ENCODE measurements at regions of chr5 and their contacts with region 1.

Region 1: DNA sequence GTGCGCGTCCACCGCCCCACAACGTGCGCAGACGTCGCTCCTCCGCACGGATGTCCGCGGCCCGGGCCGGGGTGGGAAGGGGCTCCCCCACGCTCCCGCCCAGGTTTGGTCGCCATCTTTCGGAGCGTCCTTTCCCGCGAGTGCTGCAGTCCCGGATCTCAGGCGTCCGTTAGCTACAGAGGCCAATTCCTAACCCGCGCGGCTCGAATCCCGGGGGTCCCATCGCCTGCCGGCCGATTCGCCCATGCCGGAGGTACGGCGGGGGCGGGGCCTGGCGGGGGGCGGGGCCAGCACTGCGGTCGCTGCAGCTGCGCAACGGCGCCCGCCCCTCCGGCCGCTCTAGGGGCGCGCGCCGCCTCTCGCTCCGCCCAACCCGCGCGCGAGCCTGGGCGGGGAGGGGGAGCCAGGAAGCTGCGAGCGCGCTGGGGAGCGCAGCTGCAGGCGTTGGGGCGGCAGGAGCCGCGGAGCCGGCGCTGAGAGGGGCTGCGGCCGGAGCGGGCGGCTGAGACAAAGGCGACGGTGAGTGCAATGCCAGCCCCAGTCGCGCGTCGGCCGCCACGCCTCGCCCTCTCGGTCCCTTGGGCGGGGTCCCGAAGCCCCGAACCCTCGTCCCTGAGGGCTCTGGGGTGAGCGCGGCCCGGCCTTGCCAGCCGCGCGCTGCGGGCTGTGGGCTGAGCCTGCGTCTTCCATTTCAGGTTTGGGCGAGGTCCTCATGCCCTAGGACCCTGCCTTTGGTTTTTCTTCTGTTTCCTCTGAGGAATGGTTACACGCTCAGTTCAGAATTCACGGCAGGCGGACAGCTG is at the start of gene CDC42SE2:
- DNase-seq: peak; percentile 84 to 93 (median 90)
- H3K4me3 ChIP-seq: peak within 1 kb of the TSS; percentile 97 to 99
- H3K4me3 Mint-ChIP-seq: peak within 1 kb of the TSS; percentile 91 to 95 (median 94)
- H3K27ac ChIP-seq: peak within 1 kb of the TSS; percentile 96
- H3K27ac Mint-ChIP-seq: peak within 1 kb of the TSS; percentile 92 to 98 (median 97)
- H3K4me1 ChIP-seq: peaks cover 63% of the 10 kb centered on the region
- H3K4me1 Mint-ChIP-seq: peaks cover 23 to 63% (median 43%) of the 10 kb centered on the region in 4 donors
- H3K27me3 ChIP-seq: no peaks in the 10 kb centered on the region
- H3K27me3 Mint-ChIP-seq: no peaks in the 10 kb centered on the region
- total RNA-seq, gene CDC42SE2: 298 to 316 TPM

Region 2: GRCh38 chr5:131170540-131171275 is 93.1 kb before region 1 on chr5 and contains the start of gene LYRM7:
- CTCF ChIA-PET with region 1: interaction called, 17 read pairs
- POLR2A ChIA-PET with region 1: interaction called, 83 read pairs
- intact Hi-C with region 1: loop called (anchors 1 kb)
- DNase-seq: peak; percentile 94 to 99 (median 97)
- H3K4me3 ChIP-seq: peak within 1 kb of the TSS; percentile 67 to 69
- H3K4me3 Mint-ChIP-seq: peak within 1 kb of the TSS; percentile 95 to 100 (median 98)
- H3K27ac ChIP-seq: peak within 1 kb of the TSS; percentile 88
- H3K27ac Mint-ChIP-seq: peak within 1 kb of the TSS; percentile 91 to 99 (median 97)
- H3K4me1 ChIP-seq: peaks cover 31% of the 10 kb centered on the region
- H3K4me1 Mint-ChIP-seq: peaks cover 33 to 72% (median 54%) of the 10 kb centered on the region in 4 donors
- H3K27me3 ChIP-seq: no peaks in the 10 kb centered on the region
- H3K27me3 Mint-ChIP-seq: no peaks in the 10 kb centered on the region
- total RNA-seq, gene LYRM7: 16.7 to 18.4 TPM

Region 3: DNA sequence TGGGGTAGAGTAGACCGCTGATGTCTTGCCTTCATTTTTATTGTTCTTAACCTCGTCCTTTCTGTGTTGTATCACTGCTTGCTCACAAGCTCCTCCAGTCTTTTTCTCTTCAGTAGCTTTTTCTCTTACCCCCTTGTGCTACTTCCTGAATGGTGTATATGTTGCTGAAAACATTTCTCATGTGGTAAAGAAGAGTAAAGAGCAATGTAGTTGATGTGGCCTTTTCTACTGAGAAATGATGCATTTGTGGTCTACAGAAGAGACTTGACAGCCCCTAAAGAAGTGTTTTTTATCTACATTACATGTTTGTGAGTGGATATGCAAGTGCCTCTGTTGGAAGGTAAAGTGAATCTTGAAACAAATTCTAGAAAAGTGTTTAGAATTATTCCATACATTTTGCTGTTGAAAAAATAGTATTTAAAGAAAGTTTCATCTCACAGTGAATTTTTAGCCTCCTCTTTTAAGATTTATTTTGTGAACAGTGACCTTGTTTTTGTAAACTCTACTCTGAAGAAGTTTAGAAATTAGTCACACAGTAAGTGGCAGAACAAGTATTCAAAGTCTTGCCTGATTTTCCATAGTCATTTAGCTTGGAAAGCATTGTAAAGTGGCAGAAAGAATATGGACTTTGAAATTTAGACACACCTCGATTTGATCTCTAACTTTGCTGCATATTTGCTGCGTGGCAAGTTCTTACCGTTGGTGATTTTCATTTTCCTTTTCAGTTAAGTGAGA is 17.5 kb after region 1 on chr5:
- CTCF ChIA-PET with region 1: interaction called, 30 read pairs
- POLR2A ChIA-PET with region 1: interaction called, 1,078 read pairs
- intact Hi-C with region 1: loop called (anchors 1 kb)
- DNase-seq: peak; percentile 57 to 89 (median 85)
- H3K4me3 ChIP-seq: peak overlapping the region; percentile 0 to 37
- H3K4me3 Mint-ChIP-seq: peak overlapping the region; percentile 57 to 90 (median 82)
- H3K27ac ChIP-seq: peak overlapping the region; percentile 63
- H3K27ac Mint-ChIP-seq: peak overlapping the region; percentile 71 to 95 (median 87)
- H3K4me1 ChIP-seq: peaks cover 89% of the 10 kb centered on the region
- H3K4me1 Mint-ChIP-seq: peaks cover 54 to 89% (median 73%) of the 10 kb centered on the region in 4 donors
- H3K27me3 ChIP-seq: no peaks in the 10 kb centered on the region
- H3K27me3 Mint-ChIP-seq: no peaks in the 10 kb centered on the region

Region 4: GRCh38 chr5:131303537-131303936 is 39.7 kb after region 1 on chr5:
- CTCF ChIA-PET with region 1: interaction called, 3 read pairs
- POLR2A ChIA-PET with region 1: interaction called, 24 read pairs
- intact Hi-C with region 1: no loop called
- DNase-seq: no peak
- H3K4me3 ChIP-seq: no peak overlapping the region
- H3K4me3 Mint-ChIP-seq: peak overlapping the region in 5 of 8 donors; percentile 28 to 74 (median 33)
- H3K27ac ChIP-seq: no peak overlapping the region
- H3K27ac Mint-ChIP-seq: peak overlapping the region in 3 of 7 donors; percentile 44 to 68 (median 65)
- H3K4me1 ChIP-seq: peaks cover 76% of the 10 kb centered on the region
- H3K4me1 Mint-ChIP-seq: peaks cover 60 to 80% (median 68%) of the 10 kb centered on the region in 4 donors
- H3K27me3 ChIP-seq: no peaks in the 10 kb centered on the region
- H3K27me3 Mint-ChIP-seq: no peaks in the 10 kb centered on the region

Region 5: GRCh38 chr5:131338051-131338453 is 74.2 kb after region 1 on chr5:
- CTCF ChIA-PET with region 1: interaction called, 4 read pairs
- POLR2A ChIA-PET with region 1: interaction called, 24 read pairs
- intact Hi-C with region 1: loop called (anchors 2 kb)
- DNase-seq: no peak
- H3K4me3 ChIP-seq: no peak overlapping the region
- H3K4me3 Mint-ChIP-seq: peak overlapping the region in 7 of 8 donors; percentile 36 to 84 (median 70)
- H3K27ac ChIP-seq: peak overlapping the region; percentile 52
- H3K27ac Mint-ChIP-seq: peak overlapping the region; percentile 63 to 97 (median 94)
- H3K4me1 ChIP-seq: peaks cover 58% of the 10 kb centered on the region
- H3K4me1 Mint-ChIP-seq: peaks cover 62 to 95% (median 80%) of the 10 kb centered on the region in 4 donors
- H3K27me3 ChIP-seq: no peaks in the 10 kb centered on the region
- H3K27me3 Mint-ChIP-seq: no peaks in the 10 kb centered on the region

Region 6: DNA sequence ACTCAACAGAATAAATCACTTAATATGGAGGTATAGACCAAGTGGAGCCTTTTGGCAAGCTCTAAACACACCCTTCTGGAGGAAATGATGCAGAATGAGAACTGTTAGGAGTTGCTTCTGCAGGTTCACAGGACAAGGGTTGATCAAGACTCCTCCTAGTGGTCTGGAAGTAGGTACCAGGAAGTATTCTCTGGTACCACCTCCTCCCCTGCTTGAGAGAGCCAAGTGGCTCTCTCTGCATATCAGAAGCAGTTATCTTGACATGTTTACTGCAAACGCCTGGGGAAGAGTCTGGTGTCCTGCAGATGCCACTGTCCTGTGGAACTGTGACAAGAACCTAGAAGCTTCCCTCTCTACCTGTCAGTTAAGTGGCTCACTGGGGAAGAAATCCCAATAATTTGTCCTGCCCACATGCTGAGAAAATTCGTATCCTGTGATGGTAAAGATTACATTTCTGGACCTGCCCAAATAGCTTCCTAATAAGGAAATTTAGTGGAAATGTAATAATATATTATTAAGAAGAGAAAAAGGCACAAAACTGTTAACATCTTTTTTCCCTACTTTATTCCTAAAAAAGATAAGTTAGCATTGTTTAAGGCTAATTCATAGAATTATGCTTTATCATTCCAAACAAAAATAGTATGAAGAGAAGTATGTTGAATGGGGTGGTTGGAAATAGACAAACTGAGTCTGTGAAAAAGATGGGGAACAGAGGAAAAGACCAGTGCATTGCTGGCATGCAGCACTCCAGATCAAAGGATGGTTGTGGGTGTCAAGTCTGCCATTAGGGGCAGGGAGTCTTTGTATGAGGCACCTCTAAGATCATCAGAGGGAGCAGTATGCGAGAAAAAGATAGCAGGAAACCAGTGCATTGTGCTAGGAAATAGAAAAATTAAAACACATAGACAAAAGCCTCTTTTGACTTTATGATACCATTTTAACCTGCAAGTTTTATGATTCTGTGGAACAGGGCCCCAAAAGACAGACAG is 118.9 kb after region 1 on chr5:
- CTCF ChIA-PET with region 1: interaction called, 68 read pairs
- POLR2A ChIA-PET with region 1: interaction called, 552 read pairs
- intact Hi-C with region 1: loop called (anchors 1 kb)
- DNase-seq: peak; percentile 79 to 89 (median 84)
- H3K4me3 ChIP-seq: peak overlapping the region in 1 of 2 donors; percentile 33
- H3K4me3 Mint-ChIP-seq: peak overlapping the region; percentile 67 to 90 (median 76)
- H3K27ac ChIP-seq: peak overlapping the region; percentile 99
- H3K27ac Mint-ChIP-seq: peak overlapping the region; percentile 96 to 99 (median 98)
- H3K4me1 ChIP-seq: peaks cover 100% of the 10 kb centered on the region
- H3K4me1 Mint-ChIP-seq: peaks cover 67 to 100% (median 86%) of the 10 kb centered on the region in 4 donors
- H3K27me3 ChIP-seq: no peaks in the 10 kb centered on the region
- H3K27me3 Mint-ChIP-seq: no peaks in the 10 kb centered on the region

Region 7: DNA sequence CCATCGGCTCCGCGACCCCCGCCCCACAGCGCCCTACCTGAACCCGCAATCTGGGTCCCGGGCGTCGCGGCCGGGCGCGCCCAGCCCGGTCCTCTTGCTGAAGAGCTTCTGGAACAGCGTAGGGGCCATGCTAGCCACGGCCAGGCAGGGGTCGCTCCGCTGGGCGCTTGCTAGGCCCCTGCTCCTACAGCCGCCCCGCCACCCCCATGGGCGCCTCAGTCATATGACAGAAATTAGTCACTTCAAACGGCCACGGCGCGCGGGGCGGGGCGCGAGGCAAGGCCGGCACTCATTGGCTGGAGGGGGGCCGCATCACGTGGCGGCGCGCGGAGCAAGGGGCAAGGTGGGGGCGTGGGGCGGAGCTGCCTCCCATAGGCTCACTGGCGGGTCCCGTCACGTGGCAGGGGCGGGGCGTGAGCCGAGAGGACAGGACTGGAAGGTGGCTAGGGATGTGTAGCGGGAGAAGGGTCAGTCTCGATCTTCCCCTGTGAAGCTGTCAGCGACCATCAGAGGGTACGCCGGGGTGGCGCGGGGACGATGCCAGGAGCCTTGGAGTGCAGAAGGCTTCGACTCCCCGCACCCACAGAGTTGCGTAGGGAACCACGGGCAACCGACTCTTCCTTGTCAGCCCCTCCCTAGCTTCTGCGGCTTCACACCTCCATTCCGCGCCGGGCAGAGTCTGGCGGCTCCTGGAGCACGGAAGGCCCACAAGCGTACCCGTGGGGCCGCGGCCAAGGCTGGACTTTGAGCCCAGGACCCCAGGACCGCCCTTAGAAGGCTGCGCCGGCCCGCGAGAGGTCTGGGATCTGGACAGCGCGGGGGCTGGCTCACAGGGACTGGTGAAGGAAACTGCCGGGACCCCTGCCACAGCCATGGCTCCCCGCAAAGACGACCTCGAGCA is 533.2 kb after region 1 on chr5 and contains the start of gene FNIP1:
- CTCF ChIA-PET with region 1: no interaction called
- POLR2A ChIA-PET with region 1: no interaction called
- intact Hi-C with region 1: loop called (anchors 10 kb)
- DNase-seq: peak; percentile 96 to 98 (median 97)
- H3K4me3 ChIP-seq: peak within 1 kb of the TSS; percentile 76 to 90
- H3K4me3 Mint-ChIP-seq: peak within 1 kb of the TSS; percentile 92 to 97 (median 96)
- H3K27ac ChIP-seq: peak within 1 kb of the TSS; percentile 96
- H3K27ac Mint-ChIP-seq: peak within 1 kb of the TSS; percentile 94 to 99 (median 98)
- H3K4me1 ChIP-seq: peaks cover 45% of the 10 kb centered on the region
- H3K4me1 Mint-ChIP-seq: peaks cover 19 to 43% (median 24%) of the 10 kb centered on the region in 4 donors
- H3K27me3 ChIP-seq: no peaks in the 10 kb centered on the region
- H3K27me3 Mint-ChIP-seq: no peaks in the 10 kb centered on the region
- total RNA-seq, gene FNIP1: 34.9 to 35.9 TPM